Activated CD4-positive, alpha-beta T cell treated with anti-CD3 and anti-CD28 coated beads, Interleukin-2, amount 10 ng/mL, durations not matched to agents 24 days and 14 days (primary cell): ENCODE measurements at regions of chr12 and their contacts with region 1.

Region 1: GRCh38 chr12:24728366-24728765 is 220.5 kb downstream of the BCAT1 start:
- DNase-seq: no peak
- H3K4me3 Mint-ChIP-seq: no peak overlapping the region
- H3K27ac Mint-ChIP-seq: no peak overlapping the region
- H3K4me1 Mint-ChIP-seq: peaks cover 24% of the 10 kb centered on the region
- H3K27me3 Mint-ChIP-seq: no peaks in the 10 kb centered on the region

Region 2: DNA sequence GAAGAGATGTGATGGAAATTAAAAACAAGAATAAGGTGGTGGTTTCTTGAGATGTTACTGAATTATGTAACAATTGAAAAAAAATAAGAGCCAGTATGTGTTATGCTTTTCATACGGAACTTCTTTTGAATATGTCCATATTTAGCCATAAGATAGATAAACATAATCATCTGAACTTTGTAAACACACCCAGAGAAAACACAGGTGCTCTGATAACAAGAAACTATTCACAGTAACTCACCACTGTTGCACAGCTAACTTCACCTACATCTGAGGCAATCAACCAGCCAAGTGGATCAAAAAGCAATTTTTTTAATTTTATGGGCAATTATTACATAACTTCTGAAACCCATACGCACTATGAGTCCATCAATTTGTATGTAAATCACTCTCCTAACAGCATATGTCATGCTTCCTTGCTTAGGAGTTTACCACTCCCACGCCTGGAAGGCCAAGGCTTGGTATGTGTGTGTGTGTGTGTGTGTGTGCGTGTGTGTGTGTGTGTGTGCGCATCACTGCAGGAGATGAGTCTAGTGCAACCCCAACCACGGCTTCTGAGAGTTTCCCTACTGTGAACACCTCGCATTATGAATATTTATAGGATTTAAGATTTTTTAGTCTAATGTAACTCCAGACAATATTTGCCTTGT is 222.9 kb before region 1 on chr12:
- intact Hi-C with region 1: no loop called
- DNase-seq: no peak
- H3K4me3 Mint-ChIP-seq: no peak overlapping the region
- H3K27ac Mint-ChIP-seq: no peak overlapping the region
- H3K4me1 Mint-ChIP-seq: no peaks in the 10 kb centered on the region
- H3K27me3 Mint-ChIP-seq: no peaks in the 10 kb centered on the region

Region 3: DNA sequence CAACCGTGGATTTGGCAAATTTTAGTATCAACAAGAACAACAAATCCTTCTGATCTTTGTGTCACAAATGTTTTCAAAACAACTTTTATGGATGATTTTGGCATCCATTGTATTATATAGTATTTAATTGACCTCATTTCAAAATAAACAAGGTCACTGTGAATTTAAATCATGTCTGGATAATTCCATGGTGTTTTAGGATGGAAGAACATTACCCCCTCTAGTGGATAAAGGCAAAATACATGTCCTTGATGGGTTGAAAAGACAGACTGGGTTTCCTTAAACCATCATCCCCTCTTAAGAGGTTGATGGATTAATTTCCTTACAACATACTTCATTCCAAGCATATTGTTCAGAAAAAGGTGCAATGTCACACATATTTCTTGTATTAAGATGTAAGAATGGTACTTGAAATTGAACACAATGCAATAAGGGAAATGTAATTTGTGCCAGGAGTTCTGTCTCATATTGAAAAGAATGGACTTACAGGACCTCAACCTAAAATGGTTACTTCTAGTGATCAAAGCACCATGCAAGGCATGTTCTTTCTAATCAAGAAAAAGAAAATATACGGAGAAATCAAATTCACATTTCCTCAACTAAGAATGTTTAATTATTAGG is 131.5 kb before region 1 on chr12:
- intact Hi-C with region 1: loop called (anchors 2 kb)
- DNase-seq: no peak
- H3K4me3 Mint-ChIP-seq: no peak overlapping the region
- H3K27ac Mint-ChIP-seq: no peak overlapping the region
- H3K4me1 Mint-ChIP-seq: peaks cover 2% of the 10 kb centered on the region
- H3K27me3 Mint-ChIP-seq: peaks cover 8% of the 10 kb centered on the region

Region 4: GRCh38 chr12:24754690-24755638 is 26.6 kb after region 1 on chr12:
- intact Hi-C with region 1: loop called (anchors 2 kb)
- DNase-seq: no peak
- H3K4me3 Mint-ChIP-seq: peak overlapping the region; percentile 15
- H3K27ac Mint-ChIP-seq: peak overlapping the region; percentile 85
- H3K4me1 Mint-ChIP-seq: peaks cover 19% of the 10 kb centered on the region
- H3K27me3 Mint-ChIP-seq: peaks cover 1% of the 10 kb centered on the region

Region 5: GRCh38 chr12:24822121-24822899 is 93.9 kb after region 1 on chr12:
- intact Hi-C with region 1: loop called (anchors 1 kb)
- DNase-seq: no peak
- H3K4me3 Mint-ChIP-seq: peak overlapping the region; percentile 32
- H3K27ac Mint-ChIP-seq: peak overlapping the region; percentile 34
- H3K4me1 Mint-ChIP-seq: peaks cover 24% of the 10 kb centered on the region
- H3K27me3 Mint-ChIP-seq: no peaks in the 10 kb centered on the region

Region 6: GRCh38 chr12:24948757-24949722 is 220.7 kb after region 1 on chr12 and contains the start of gene BCAT1:
- intact Hi-C with region 1: loop called (anchors 5 kb)
- DNase-seq: peak; percentile 82
- H3K4me3 Mint-ChIP-seq: peak within 1 kb of the TSS; percentile 92
- H3K27ac Mint-ChIP-seq: peak within 1 kb of the TSS; percentile 93
- H3K4me1 Mint-ChIP-seq: peaks cover 52% of the 10 kb centered on the region
- H3K27me3 Mint-ChIP-seq: peaks cover 8% of the 10 kb centered on the region
- total RNA-seq, gene BCAT1: 49.7 and 51.9 TPM in 2 replicates

Region 7: DNA sequence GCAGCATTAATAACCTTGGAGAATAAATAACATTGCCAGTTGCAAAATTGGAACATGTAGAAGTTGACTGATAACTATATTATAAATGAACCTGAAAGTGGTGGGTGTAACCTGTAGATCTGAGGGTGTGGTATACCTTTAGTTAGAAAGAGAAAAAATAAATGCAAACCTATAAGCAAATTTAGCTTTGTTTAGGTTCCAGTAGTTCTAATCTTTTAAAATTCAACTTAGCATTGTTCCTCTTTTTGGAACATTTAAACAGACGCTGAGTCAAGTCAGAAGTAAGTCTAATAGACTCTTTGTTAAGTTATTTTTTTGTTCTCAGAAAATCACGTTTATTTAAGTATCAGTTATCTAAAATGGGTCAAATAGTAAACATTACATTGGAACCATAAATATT is 346.6 kb after region 1 on chr12:
- intact Hi-C with region 1: no loop called
- DNase-seq: no peak
- H3K4me3 Mint-ChIP-seq: no peak overlapping the region
- H3K27ac Mint-ChIP-seq: no peak overlapping the region
- H3K4me1 Mint-ChIP-seq: peaks cover 8% of the 10 kb centered on the region
- H3K27me3 Mint-ChIP-seq: no peaks in the 10 kb centered on the region